Ascending aorta (tissue), 2 donors: ENCODE measurements at regions of chr21 and their contacts with region 1.

Region 1: DNA sequence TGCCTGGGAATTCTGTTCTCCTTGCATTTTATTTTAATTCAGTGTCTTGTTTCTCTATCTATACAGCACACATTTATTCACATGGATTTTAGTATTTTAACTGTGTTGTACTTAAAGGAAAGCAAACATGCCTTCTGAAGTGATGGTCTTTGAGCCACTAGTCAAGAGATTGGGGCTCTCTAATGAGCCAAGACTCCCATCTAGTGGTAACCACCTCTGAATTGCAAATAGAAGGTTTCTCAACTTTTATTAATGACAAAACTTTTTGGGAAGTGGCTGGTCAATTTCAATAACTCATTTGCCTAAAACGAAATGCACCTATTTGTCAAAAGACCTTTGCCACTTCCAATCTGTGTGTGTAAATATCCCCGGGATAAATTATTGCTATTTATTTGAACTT is 199.6 kb downstream of the LTN1 start:
- DNase-seq: no peak
- H3K4me3 ChIP-seq: no peak overlapping the region
- H3K27ac ChIP-seq: peak overlapping the region in 1 of 2 donors; percentile 24
- H3K4me1 ChIP-seq: no peaks in the 10 kb centered on the region
- H3K27me3 ChIP-seq: no peaks in the 10 kb centered on the region
- CTCF ChIP-seq: peak; percentile 37 to 67 (median 40)

Region 2: DNA sequence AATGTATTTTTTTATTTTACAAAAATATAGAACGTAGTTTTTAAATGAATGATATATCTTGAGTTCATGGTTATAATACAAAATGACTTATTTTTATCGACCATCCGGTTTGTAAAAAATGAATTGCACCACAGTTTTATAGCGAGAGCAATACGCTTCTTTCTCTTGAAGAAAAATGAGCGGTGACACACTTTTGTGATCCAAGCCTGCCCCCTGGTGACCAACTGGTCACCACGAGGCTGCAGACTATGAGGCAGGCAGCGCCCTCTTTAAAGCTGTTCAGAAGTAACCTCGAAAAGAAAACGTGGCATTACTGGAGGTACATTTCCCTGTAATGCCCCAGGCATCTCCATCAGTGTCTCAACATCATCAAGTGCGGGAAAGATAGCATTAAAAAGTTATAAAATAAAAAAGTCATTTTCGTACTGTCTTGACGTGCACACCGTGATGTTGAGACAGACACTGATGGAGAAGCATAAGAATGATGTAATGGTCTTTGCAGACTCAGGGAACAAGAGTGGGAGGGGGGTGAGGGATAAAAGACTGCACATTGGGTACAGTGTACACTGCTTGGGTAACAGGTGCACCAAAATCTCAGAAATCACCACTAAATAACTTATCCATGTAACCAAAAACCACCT is 1091.9 kb before region 1 on chr21:
- intact Hi-C with region 1: no loop called
- DNase-seq: peak; percentile 18 to 88
- H3K4me3 ChIP-seq: no peak overlapping the region
- H3K27ac ChIP-seq: no peak overlapping the region
- H3K4me1 ChIP-seq: no peaks in the 10 kb centered on the region
- H3K27me3 ChIP-seq: no peaks in the 10 kb centered on the region
- CTCF ChIP-seq: peak; percentile 73 to 87 (median 81)

Region 3: GRCh38 chr21:28522014-28522799 is 270.8 kb before region 1 on chr21:
- intact Hi-C with region 1: loop called (anchors 10 kb)
- DNase-seq: no peak
- H3K4me3 ChIP-seq: no peak overlapping the region
- H3K27ac ChIP-seq: peak overlapping the region in 1 of 2 donors; percentile 43
- H3K4me1 ChIP-seq: peaks cover 0 to 13% of the 10 kb centered on the region in 2 donors
- H3K27me3 ChIP-seq: no peaks in the 10 kb centered on the region
- CTCF ChIP-seq: no peak

Region 4: DNA sequence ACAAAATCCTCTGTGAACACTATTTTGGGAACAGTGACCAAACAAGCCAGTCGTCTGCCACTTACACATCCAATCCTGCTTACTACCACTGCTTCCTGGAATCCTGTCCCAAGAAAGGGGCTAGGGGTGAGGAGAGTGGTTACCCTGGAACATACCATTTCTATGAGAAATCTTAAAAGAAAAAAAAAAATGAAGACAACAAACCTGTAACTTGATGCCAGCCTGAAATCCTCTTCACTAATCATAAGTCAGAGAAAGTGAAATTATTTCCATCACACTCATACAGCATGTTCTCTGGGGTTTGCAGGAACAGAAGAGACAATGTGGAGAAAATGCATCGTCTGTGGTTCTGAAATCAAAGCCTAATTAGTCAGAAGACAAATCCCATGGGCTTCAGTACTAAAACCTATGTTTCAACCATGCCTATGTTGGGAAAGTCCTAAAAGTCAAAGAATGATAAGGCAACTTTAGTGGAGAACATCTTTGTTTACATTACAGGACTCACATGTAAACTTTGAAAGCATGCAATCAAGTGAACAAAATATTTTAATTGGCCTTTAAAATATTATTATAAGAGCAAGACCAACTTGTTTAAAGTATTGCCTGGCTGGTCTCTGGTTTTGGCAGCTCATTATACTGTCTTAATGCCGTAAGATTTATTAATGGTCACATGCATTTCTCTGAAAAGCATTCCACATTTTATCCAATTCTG is 21.1 kb before region 1 on chr21:
- intact Hi-C with region 1: loop called (anchors 2 kb)
- DNase-seq: peak in 1 of 2 donors; percentile 85
- H3K4me3 ChIP-seq: peak overlapping the region in 1 of 2 donors; percentile 9
- H3K27ac ChIP-seq: peak overlapping the region; percentile 86 to 91
- H3K4me1 ChIP-seq: peaks cover 18 to 57% of the 10 kb centered on the region in 2 donors
- H3K27me3 ChIP-seq: no peaks in the 10 kb centered on the region
- CTCF ChIP-seq: no peak

Region 5: GRCh38 chr21:28928578-28929420 is 135.8 kb after region 1 on chr21:
- intact Hi-C with region 1: no loop called
- DNase-seq: no peak
- H3K4me3 ChIP-seq: no peak overlapping the region
- H3K27ac ChIP-seq: no peak overlapping the region
- H3K4me1 ChIP-seq: peaks cover 0 to 5% of the 10 kb centered on the region in 2 donors
- H3K27me3 ChIP-seq: no peaks in the 10 kb centered on the region
- CTCF ChIP-seq: no peak

Region 6: DNA sequence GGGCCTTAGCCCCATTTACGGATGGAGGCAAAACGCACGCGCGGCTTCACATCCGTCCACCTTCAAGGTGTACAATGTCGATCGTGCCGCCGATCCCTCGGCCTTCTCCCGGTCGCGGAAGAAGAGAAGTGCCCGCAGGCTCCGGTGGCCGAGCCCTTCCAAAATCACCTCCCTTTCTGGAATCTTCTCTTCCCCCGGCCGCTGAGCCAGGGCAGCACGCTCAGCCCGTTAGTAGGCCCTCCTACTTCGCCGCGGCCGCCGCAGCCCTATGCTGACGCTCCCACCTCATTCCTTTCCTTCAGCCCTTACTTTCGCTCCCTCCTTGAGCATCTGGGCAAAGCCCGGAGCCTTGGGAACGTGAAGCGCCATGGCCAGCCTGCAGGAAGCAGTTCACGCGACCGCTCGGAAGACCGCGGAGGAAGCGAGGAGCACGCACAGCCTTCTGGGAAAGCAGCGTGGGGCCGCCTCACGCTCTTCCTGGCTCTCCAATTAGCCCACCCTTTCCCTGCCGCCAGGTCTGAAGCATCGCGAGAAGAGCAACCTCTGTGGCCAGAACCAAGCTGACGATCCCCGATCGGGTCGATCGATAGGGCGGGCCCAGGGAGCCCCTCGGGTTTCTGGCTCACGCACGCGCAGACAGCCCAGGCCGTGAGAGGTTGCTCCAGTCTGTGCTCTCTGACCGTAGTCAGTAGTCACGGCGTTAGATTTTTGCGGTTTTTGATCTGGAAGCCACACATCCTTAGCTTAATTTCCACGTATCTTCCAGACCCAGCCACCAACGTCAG is 280.4 kb after region 1 on chr21 and contains the start of gene CCT8:
- intact Hi-C with region 1: no loop called
- DNase-seq: peak; percentile 95 to 99
- H3K4me3 ChIP-seq: peak within 1 kb of the TSS; percentile 71 to 73
- H3K27ac ChIP-seq: peak within 1 kb of the TSS; percentile 83 to 86
- H3K4me1 ChIP-seq: peaks cover 0 to 6% of the 10 kb centered on the region in 2 donors
- H3K27me3 ChIP-seq: no peaks in the 10 kb centered on the region
- CTCF ChIP-seq: no peak
- total RNA-seq, gene CCT8: 36.7 TPM